ENCODE measurements at regions of chr16 and their contacts with region 1.

Region 1: DNA sequence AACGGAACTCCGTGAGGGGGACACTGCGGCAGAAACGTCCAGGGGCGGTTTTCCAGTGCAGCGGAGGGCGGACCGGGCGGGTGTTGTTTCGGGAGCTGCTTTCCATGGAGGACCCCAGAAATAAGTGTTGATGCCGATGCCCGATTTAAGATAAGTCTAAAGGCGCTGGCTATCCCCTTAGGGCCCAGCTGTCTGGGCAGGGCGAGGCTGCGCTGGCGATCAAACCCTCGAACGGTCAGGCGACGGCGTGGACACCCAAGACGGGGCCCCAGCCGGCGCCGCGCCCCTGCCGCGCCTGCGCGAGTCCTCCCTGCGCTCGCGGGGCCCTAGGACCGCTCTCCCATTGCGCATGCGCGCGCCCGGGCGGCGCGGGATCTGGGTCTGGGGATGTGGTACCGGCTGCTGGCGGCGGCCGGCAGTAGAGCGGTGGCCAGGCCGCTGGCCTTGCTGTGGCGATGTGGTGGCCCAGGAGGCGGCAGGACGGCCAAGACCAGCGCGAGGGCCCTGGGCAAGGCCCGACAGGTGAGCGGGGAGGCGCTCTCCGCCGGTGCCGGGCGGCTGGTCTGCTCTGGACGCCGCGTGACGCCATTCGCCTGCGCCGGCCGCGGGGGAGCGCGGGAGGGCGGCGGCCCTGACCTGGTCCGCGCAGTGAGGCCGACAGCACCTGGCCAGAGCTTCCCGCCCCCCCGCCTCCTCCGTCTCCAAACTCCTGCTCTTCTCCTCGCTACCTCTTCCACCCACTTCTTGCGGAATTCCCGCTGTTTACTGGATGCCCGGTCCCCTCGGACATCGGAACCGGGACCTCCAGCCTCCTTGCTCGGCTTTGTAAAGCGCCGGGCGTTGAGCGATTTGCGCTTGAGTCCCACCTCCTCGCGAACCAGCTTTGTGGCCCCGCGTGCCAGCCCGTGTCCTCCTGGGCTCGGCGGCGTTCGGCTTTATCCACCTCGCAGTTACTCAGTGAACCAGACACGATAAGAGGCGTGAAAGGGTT is 24.0 kb downstream of the DEF8 start:
- DNase-seq: peak; percentile 90 to 94
- ATAC-seq: peak; percentile 95 to 98 (median 98)
- H3K4me3 ChIP-seq: peak overlapping the region; percentile 69 to 99 (median 95)
- H3K27ac ChIP-seq: peak overlapping the region; percentile 91 to 99 (median 98)
- H3K4me1 ChIP-seq: peaks cover 3 to 45% (median 33%) of the 10 kb centered on the region in 9 donors
- H3K27me3 ChIP-seq: no peaks in the 10 kb centered on the region
- CTCF ChIP-seq: peak in 3 of 9 donors; percentile 7 to 26 (median 19)

Region 2: GRCh38 chr16:89931305-89931896 is 41.1 kb before region 1 on chr16:
- intact Hi-C with region 1: loop called in 1 of 10 experiments (anchors 5 kb)
- DNase-seq: no peak
- ATAC-seq: no peak
- H3K4me3 ChIP-seq: no peak overlapping the region
- H3K27ac ChIP-seq: no peak overlapping the region
- H3K4me1 ChIP-seq: peaks cover 0 to 5% (median 4%) of the 10 kb centered on the region in 9 donors
- H3K27me3 ChIP-seq: peaks cover 0 to 26% (median 0%) of the 10 kb centered on the region in 7 donors
- CTCF ChIP-seq: no peak

Region 3: DNA sequence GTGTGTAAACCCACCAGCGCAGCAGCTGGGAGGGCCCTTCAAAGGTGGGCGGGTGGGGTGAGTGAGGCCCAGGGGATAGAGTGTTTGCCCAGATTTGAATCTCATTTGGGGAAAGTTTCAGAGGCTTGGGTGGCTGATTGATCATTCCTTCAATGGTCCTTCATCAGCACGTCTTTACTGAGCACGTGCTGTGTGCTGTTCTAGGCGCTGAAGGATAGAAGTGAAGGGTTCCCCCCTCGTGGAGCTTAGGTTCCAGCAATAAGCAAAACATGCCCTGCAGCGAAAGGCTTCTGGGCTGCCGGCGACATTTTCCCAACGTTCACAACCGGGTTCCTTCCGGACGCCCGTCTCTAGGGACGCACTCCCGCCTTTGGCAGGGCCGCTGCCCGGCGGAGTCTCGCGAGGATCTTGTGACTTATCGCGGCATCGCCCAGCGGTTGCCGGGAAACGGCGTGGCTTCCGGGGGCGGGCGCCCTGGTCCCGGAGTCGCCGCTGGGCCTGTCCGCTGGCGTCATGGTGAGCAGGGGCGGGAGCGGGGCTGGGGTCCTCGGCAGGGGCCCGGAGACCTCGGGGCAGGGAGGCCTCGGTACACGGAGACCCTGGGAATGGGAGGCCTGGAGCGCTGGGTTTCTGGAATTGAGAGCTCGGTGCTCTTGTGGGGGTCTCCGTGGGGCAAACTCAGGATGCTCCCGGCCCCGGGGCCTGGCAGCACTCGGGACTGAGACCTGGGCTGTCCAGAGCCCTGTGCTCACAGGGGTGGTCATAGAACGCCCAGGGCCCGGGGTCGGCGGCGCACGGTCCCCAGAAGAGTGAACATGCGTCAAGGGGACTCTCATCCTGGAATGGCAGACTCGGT is 49.9 kb after region 1 on chr16:
- intact Hi-C with region 1: loop called in 1 of 10 experiments (anchors 5 kb)
- DNase-seq: peak; percentile 93 to 95
- ATAC-seq: peak; percentile 89 to 97 (median 94)
- H3K4me3 ChIP-seq: peak overlapping the region; percentile 61 to 91 (median 78)
- H3K27ac ChIP-seq: peak overlapping the region in 9 of 10 donors; percentile 67 to 91 (median 83)
- H3K4me1 ChIP-seq: peaks cover 7 to 48% (median 35%) of the 10 kb centered on the region in 9 donors
- H3K27me3 ChIP-seq: peaks cover 0 to 23% (median 0%) of the 10 kb centered on the region in 7 donors
- CTCF ChIP-seq: no peak

Measured in heart right ventricle (tissue), 16 donors.